Panc1 (cell line): ENCODE measurements at regions of chr3 and their contacts with region 1.

Region 1: GRCh38 chr3:101381809-101382208 is 61.4 kb upstream of the IMPG2 start:
- DNase-seq: no peak
- ATAC-seq: peak; percentile 76
- H3K4me3 ChIP-seq: no peak overlapping the region
- H3K27ac ChIP-seq: no peak overlapping the region
- H3K4me1 ChIP-seq: no peaks in the 10 kb centered on the region
- H3K27me3 ChIP-seq: no peaks in the 10 kb centered on the region
- CTCF ChIP-seq: peak; percentile 70; the same call in 1 of the 2 replicates

Region 2: GRCh38 chr3:100756441-100756840 is 625.4 kb before region 1 on chr3:
- CTCF ChIA-PET with region 1: no interaction called
- POLR2A ChIA-PET with region 1: no interaction called
- in situ Hi-C with region 1: no loop called
- intact Hi-C with region 1: loop called (anchors 5 kb)
- DNase-seq: no peak
- ATAC-seq: no peak
- H3K4me3 ChIP-seq: no peak overlapping the region
- H3K27ac ChIP-seq: no peak overlapping the region
- H3K4me1 ChIP-seq: no peaks in the 10 kb centered on the region
- H3K27me3 ChIP-seq: no peaks in the 10 kb centered on the region
- CTCF ChIP-seq: no peak

Region 3: GRCh38 chr3:101069901-101070798 is 311.7 kb before region 1 on chr3:
- CTCF ChIA-PET with region 1: no interaction called
- POLR2A ChIA-PET with region 1: no interaction called
- in situ Hi-C with region 1: no loop called
- intact Hi-C with region 1: loop called (anchors 5 kb)
- DNase-seq: no peak
- ATAC-seq: peak; percentile 84
- H3K4me3 ChIP-seq: no peak overlapping the region
- H3K27ac ChIP-seq: no peak overlapping the region
- H3K4me1 ChIP-seq: no peaks in the 10 kb centered on the region
- H3K27me3 ChIP-seq: no peaks in the 10 kb centered on the region
- CTCF ChIP-seq: peak; percentile 90

Region 4: DNA sequence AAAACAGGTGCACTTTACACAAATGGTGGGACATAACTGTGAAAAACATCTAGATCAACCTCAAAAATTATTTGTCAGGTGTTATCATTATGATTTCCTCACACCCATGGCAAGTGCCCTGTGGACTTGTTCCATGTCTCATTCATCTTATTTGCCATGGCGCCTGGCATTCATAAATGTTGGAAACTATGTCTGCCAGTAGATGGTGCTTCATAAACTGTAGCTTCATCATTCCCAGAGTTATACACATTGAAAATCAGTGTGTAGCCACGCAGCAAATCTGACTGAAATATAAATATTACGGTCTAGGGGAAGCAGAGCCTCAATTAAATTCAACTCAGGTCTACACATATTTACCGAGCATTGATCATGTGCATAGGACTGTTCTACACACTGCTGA is 152.1 kb before region 1 on chr3:
- CTCF ChIA-PET with region 1: no interaction called
- POLR2A ChIA-PET with region 1: no interaction called
- in situ Hi-C with region 1: no loop called
- intact Hi-C with region 1: loop called (anchors 10 kb)
- DNase-seq: no peak
- ATAC-seq: no peak
- H3K4me3 ChIP-seq: no peak overlapping the region
- H3K27ac ChIP-seq: no peak overlapping the region
- H3K4me1 ChIP-seq: no peaks in the 10 kb centered on the region
- H3K27me3 ChIP-seq: peaks cover 7% of the 10 kb centered on the region
- CTCF ChIP-seq: peak; percentile 58

Region 5: DNA sequence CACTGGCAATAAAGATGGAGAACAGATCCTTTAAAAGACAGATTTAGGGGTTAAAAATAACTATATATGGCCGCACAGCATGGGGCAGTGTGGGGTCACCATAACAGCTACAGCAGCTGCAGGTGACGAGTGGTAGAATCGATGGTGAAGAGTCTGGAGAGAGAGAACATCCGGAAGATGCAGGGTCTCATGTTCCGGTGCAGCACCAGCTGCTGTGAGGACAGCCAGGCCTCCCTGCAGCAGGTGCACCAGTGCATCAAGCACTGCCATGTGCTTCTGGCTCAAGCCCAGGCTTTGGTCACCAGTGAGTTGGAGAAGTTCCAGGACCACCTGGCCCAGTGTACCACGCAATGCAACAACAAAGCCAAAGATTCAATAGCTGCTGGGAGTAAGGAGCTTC is 32.3 kb after region 1 on chr3:
- CTCF ChIA-PET with region 1: no interaction called
- POLR2A ChIA-PET with region 1: no interaction called
- in situ Hi-C with region 1: no loop called
- intact Hi-C with region 1: no loop called
- DNase-seq: no peak
- ATAC-seq: no peak
- H3K4me3 ChIP-seq: no peak overlapping the region
- H3K27ac ChIP-seq: no peak overlapping the region
- H3K4me1 ChIP-seq: no peaks in the 10 kb centered on the region
- H3K27me3 ChIP-seq: no peaks in the 10 kb centered on the region
- CTCF ChIP-seq: no peak